ENCODE measurements at regions of chr1 and their contacts with region 1.

Region 1: DNA sequence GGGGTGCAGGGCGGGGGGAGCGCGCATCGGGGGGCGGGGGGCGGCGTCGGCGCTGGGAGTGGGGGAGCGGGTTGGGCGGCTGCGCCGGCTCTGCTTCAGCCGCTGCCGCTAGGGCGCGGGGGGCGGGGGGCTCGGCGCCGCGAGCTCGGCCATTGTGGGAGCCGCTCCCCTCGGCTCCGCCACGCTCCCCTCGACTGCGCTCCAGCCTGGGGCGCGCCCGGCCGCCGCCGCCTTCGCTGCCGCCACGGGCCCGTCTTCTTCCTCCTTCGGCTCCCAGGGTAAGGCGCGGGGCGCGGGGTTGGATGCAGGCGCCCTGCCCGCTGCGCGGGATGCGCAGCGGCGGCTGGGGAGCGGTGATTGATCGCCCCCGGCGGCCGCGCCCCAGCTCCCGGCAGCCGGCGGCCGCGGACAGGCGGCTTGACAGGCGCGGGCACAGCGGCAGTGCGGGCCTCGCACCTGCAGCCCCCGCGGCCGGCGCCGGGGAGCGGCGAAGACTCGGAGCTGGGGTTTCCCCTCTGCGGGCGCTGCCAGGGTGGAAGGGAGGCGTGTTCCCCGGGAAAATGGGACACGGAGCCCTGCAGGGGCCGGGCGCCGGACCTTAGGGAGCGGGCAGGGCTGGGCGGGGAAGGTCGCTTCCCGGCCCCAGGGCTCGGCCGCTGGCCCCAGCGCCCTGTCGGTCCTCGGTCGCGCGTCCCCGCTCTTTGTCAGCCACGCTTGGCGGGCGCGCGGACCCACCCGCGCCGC is 55.3 kb downstream of the NDUFS5 start:
- DNase-seq: no peak
- H3K4me3 ChIP-seq: peak overlapping the region; percentile 11 to 46 (median 43)
- H3K27ac ChIP-seq: no peak overlapping the region
- H3K4me1 ChIP-seq: peaks cover 9% of the 10 kb centered on the region
- H3K27me3 ChIP-seq: peaks cover 11% of the 10 kb centered on the region
- CTCF ChIP-seq: no peak

Region 2: DNA sequence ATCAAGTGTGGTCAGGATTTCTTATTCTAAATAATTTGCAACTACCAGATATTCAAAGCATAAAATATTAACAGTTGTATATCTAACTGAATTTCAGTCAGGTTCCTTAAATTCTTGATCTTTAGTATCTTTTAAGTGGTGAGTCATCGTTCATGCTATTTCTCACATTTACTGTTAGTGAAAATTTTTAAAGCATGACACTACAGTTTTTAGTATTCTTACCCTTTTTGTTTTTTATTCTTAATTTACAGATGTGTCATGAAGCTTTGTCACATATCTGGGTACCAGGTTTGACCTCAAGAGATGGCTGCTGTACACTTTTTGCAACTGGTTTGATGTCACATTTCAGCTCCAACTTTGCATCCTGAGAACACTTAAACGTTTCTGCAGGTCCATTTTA is 77.6 kb before region 1 on chr1:
- CTCF ChIA-PET with region 1: no interaction called
- dilution Hi-C with region 1: loop called (anchors 5 kb)
- in situ Hi-C with region 1: no loop called
- intact Hi-C with region 1: no loop called
- DNase-seq: no peak
- H3K4me3 ChIP-seq: no peak overlapping the region
- H3K27ac ChIP-seq: no peak overlapping the region
- H3K4me1 ChIP-seq: peaks cover 9% of the 10 kb centered on the region
- H3K27me3 ChIP-seq: no peaks in the 10 kb centered on the region
- CTCF ChIP-seq: no peak

Region 3: GRCh38 chr1:39047374-39048229 is 33.8 kb before region 1 on chr1:
- CTCF ChIA-PET with region 1: no interaction called
- dilution Hi-C with region 1: no loop called
- in situ Hi-C with region 1: no loop called
- intact Hi-C with region 1: no loop called
- DNase-seq: peak; percentile 12
- H3K4me3 ChIP-seq: no peak overlapping the region
- H3K27ac ChIP-seq: no peak overlapping the region
- H3K4me1 ChIP-seq: no peaks in the 10 kb centered on the region
- H3K27me3 ChIP-seq: no peaks in the 10 kb centered on the region
- CTCF ChIP-seq: no peak

Measured in mammary epithelial cell (primary cell).